ENCODE measurements at regions of chr9 and their contacts with region 1.

Region 1: GRCh38 chr9:16705121-16705604 is 165.3 kb downstream of the BNC2 start:
- DNase-seq: peak; percentile 41 to 76 (median 53)
- ATAC-seq: peak; percentile 63
- H3K4me3 ChIP-seq: no peak overlapping the region
- H3K4me1 ChIP-seq: no peaks in the 10 kb centered on the region
- CTCF ChIP-seq: no peak

Region 2: GRCh38 chr9:16637218-16637617 is 67.9 kb before region 1 on chr9:
- intact Hi-C with region 1: loop called in 1 of 2 experiments (anchors 10 kb)
- DNase-seq: no peak
- ATAC-seq: no peak
- H3K4me3 ChIP-seq: no peak overlapping the region
- H3K4me1 ChIP-seq: no peaks in the 10 kb centered on the region
- CTCF ChIP-seq: no peak

Region 3: GRCh38 chr9:16744394-16744793 is 39.2 kb after region 1 on chr9:
- intact Hi-C with region 1: no loop called
- DNase-seq: peak in 1 of 3 donors; percentile 8
- ATAC-seq: no peak
- H3K4me3 ChIP-seq: no peak overlapping the region
- H3K4me1 ChIP-seq: no peaks in the 10 kb centered on the region
- CTCF ChIP-seq: no peak

Region 4: DNA sequence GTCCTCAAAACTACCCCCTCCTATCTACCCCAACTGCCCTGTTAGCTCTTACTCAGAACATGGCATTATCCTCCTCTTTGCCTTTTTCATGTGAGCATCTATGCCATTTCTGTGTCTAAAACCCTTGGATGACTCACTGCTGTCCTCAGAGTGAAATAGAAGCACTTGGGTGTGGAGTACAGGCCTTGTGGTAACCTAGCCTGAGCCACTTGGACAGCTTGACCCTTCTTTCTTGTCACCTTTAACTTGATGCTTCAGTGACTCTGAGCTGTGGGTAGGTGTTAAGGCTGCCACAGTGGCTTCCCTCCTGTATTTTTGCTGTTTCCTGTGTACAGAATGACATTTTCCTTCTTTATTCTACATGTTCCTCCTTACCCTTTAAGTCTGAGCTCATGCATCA is 1265.1 kb after region 1 on chr9:
- intact Hi-C with region 1: no loop called
- DNase-seq: no peak
- ATAC-seq: peak; percentile 85
- H3K4me3 ChIP-seq: no peak overlapping the region
- H3K4me1 ChIP-seq: no peaks in the 10 kb centered on the region
- CTCF ChIP-seq: no peak